ENCODE measurements at regions of chr1 and their contacts with region 1.

Region 1: GRCh38 chr1:160471253-160471652 is 51.8 kb downstream of the SLAMF6 start:
- DNase-seq: peak; percentile 38
- H3K4me3 Mint-ChIP-seq: no peak overlapping the region
- H3K27ac Mint-ChIP-seq: no peak overlapping the region
- H3K4me1 Mint-ChIP-seq: peaks cover 15% of the 10 kb centered on the region
- H3K27me3 Mint-ChIP-seq: no peaks in the 10 kb centered on the region

Region 2: DNA sequence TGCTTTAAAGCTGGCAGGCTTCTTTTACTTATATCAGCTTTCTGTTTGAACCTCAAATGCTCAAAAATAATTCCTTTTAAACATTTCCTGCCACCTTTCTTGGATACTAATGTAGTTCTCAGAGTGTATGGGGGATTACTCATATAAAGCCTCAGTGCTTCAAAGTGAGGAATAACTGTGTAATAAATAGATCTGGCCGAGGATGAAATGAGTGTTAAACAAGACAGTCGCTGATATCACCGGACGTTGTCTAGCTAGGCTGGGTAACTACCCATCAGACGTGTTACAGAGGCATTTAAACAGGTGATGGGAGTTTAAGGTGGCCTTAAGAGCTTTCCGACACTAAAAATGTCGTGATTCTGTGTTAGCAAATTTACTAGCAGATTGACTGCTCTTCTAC is 17.8 kb before region 1 on chr1:
- CTCF ChIA-PET with region 1: interaction called, 32 read pairs
- POLR2A ChIA-PET with region 1: no interaction called
- DNase-seq: no peak
- H3K4me3 Mint-ChIP-seq: peak overlapping the region; percentile 23
- H3K27ac Mint-ChIP-seq: peak overlapping the region; percentile 83
- H3K4me1 Mint-ChIP-seq: peaks cover 46% of the 10 kb centered on the region
- H3K27me3 Mint-ChIP-seq: no peaks in the 10 kb centered on the region

Region 3: DNA sequence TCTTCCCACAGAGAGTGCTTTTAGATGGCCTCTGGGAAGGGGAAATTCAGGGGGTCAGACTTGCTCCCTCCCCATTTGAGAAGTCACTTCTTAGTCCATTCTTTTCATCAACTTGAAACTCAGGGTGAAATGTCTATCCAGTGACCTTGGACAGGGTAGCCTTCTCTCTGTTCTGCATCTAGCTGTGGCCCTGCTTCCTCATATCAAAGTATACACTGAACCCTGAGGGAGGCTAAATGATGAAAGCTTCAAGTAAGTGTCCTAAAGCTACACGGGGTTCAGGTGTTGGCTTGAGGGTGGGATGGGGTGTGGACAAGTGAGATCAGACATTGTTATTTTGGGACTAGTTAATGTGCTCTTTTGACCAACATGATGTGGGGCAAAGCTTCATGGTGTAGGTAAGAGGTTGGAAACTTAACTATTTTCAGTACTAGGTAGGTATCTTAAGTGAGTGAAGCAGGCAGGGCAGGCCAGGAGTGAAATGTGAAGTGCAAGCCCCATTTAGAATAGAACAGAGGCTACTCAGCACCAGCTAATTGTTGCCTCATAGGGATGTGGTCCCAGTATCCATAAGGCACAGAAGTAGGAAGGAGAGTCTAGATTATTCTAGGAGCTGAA is 10.8 kb after region 1 on chr1:
- CTCF ChIA-PET with region 1: interaction called, 13 read pairs
- POLR2A ChIA-PET with region 1: interaction called, 3 read pairs
- DNase-seq: no peak
- H3K4me3 Mint-ChIP-seq: no peak overlapping the region
- H3K27ac Mint-ChIP-seq: peak overlapping the region; percentile 3
- H3K4me1 Mint-ChIP-seq: peaks cover 15% of the 10 kb centered on the region
- H3K27me3 Mint-ChIP-seq: no peaks in the 10 kb centered on the region

Measured in activated CD4-positive, alpha-beta T cell treated with anti-CD3 and anti-CD28 coated beads, Interleukin-2, amount 10 ng/mL, durations not matched to agents 7 days and 5 days (primary cell).